Sigmoid colon (tissue), 7 donors: ENCODE measurements at regions of chr15 and their contacts with region 1.

Region 1: GRCh38 chr15:83653639-83654378 is at the start of gene ADAMTSL3:
- DNase-seq: peak; percentile 92
- H3K4me3 ChIP-seq: peak within 1 kb of the TSS; percentile 63 to 80 (median 69)
- H3K27ac ChIP-seq: peak within 1 kb of the TSS; percentile 82 to 87 (median 86)
- H3K4me1 ChIP-seq: peaks cover 0 to 49% (median 44%) of the 10 kb centered on the region in 4 donors
- H3K27me3 ChIP-seq: no peaks in the 10 kb centered on the region
- CTCF ChIP-seq: no peak
- EP300 ChIP-seq: no peak
- POLR2A ChIP-seq: no peak
- total RNA-seq, gene ADAMTSL3: 29.2 to 40.7 (median 37.6) TPM

Region 2: GRCh38 chr15:83477808-83478537 is 175.8 kb before region 1 on chr15:
- intact Hi-C with region 1: no loop called
- DNase-seq: no peak
- H3K4me3 ChIP-seq: no peak overlapping the region
- H3K27ac ChIP-seq: no peak overlapping the region
- H3K4me1 ChIP-seq: no peaks in the 10 kb centered on the region
- H3K27me3 ChIP-seq: no peaks in the 10 kb centered on the region
- CTCF ChIP-seq: no peak
- EP300 ChIP-seq: no peak
- POLR2A ChIP-seq: no peak

Region 3: GRCh38 chr15:83567318-83567717 is 86.5 kb before region 1 on chr15:
- intact Hi-C with region 1: loop called (anchors 5 kb)
- DNase-seq: no peak
- H3K4me3 ChIP-seq: no peak overlapping the region
- H3K27ac ChIP-seq: no peak overlapping the region
- H3K4me1 ChIP-seq: peaks cover 0 to 3% (median 0%) of the 10 kb centered on the region in 4 donors
- H3K27me3 ChIP-seq: no peaks in the 10 kb centered on the region
- CTCF ChIP-seq: no peak
- EP300 ChIP-seq: no peak
- POLR2A ChIP-seq: no peak

Region 4: GRCh38 chr15:83747050-83747717 is 93.4 kb after region 1 on chr15:
- intact Hi-C with region 1: loop called (anchors 2 kb)
- DNase-seq: peak; percentile 87
- H3K4me3 ChIP-seq: peak overlapping the region in 2 of 4 donors; percentile 13 to 27
- H3K27ac ChIP-seq: peak overlapping the region; percentile 67 to 81 (median 72)
- H3K4me1 ChIP-seq: peaks cover 0 to 22% (median 15%) of the 10 kb centered on the region in 4 donors
- H3K27me3 ChIP-seq: no peaks in the 10 kb centered on the region
- CTCF ChIP-seq: peak; percentile 42 to 54 (median 46)
- EP300 ChIP-seq: no peak
- POLR2A ChIP-seq: no peak

Region 5: DNA sequence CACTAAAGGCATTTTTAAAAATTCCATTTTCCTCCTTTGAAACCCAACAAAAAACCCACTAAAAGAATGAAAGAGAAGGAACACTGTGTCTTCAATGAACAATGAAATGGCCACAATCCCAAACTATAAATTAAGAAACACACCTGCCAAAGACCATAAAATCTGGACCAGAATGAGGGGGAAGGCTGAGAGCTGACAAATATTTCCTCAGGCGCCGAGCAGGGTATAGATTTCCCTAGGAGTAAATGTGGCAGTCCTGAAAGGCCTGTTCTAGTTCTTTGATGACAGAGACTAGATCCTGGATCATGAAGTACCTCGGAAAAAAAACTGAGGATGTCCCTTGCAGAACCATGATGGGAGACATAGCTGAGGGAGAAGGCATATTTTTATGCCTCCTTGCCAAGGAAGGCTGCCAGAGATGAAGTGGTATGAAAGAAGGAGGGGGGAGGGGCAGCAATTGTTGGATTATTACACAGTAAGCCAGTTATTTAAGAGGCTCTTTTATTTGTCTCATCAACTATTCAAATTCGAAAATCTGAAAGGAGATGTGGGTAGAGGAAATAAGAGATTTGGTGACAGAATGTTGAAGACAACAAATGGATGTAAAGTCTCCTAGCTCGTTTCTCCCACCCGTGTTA is 306.5 kb after region 1 on chr15:
- intact Hi-C with region 1: loop called (anchors 10 kb)
- DNase-seq: no peak
- H3K4me3 ChIP-seq: no peak overlapping the region
- H3K27ac ChIP-seq: peak overlapping the region in 3 of 4 donors; percentile 9 to 69 (median 60)
- H3K4me1 ChIP-seq: peaks cover 0 to 28% (median 18%) of the 10 kb centered on the region in 4 donors
- H3K27me3 ChIP-seq: no peaks in the 10 kb centered on the region
- CTCF ChIP-seq: no peak
- EP300 ChIP-seq: peak in 1 of 4 donors; percentile 46
- POLR2A ChIP-seq: no peak